Uterus (tissue), 4 donors: ENCODE measurements at regions of chr19 and their contacts with region 1.

Region 1: DNA sequence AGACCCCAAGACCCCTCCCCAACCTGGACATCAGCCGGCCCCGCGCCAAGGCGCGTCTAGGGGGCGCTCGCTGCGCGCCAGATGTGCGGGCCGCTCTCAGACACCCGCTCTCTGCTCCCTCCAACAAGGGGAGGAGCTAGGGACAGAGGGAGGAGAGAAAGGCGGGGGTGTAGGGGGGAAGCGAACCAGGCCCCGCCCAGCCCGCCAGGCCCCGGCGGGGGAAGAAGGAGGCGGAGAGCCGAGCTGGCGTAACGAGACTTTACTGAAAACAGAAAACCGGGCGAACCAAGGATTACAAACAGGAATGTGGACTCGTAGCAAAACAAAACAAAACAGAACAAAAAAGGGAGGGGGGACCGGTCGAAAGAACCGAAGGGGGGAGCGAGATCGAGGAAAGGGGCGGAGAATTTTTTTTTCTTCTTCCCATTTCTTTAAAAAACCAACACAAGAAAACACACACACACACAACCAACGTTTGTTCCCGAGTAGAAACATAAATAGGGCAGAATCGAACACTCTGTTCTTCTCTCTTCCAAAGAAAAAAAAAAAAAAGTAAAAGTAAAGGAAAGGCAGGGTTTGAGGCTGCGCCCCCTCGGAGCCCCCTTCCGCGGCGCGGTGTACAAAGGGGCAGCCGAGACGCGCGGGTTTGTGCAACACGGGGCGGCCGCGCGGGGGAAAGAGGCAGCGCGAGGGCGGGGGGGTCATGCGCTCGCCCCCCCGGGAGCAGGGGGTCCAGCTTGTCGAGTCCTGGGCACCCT is 1.7 kb downstream of the JUND start:
- DNase-seq: peak; percentile 94
- H3K4me3 ChIP-seq: peak overlapping the region; percentile 65 to 78
- H3K27ac ChIP-seq: peak overlapping the region; percentile 95 to 100
- H3K4me1 ChIP-seq: peaks cover 10 to 19% of the 10 kb centered on the region in 2 donors
- H3K27me3 ChIP-seq: no peaks in the 10 kb centered on the region
- CTCF ChIP-seq: peak; percentile 92 to 99 (median 96)
- POLR2A ChIP-seq: peak; percentile 95 to 99

Region 2: DNA sequence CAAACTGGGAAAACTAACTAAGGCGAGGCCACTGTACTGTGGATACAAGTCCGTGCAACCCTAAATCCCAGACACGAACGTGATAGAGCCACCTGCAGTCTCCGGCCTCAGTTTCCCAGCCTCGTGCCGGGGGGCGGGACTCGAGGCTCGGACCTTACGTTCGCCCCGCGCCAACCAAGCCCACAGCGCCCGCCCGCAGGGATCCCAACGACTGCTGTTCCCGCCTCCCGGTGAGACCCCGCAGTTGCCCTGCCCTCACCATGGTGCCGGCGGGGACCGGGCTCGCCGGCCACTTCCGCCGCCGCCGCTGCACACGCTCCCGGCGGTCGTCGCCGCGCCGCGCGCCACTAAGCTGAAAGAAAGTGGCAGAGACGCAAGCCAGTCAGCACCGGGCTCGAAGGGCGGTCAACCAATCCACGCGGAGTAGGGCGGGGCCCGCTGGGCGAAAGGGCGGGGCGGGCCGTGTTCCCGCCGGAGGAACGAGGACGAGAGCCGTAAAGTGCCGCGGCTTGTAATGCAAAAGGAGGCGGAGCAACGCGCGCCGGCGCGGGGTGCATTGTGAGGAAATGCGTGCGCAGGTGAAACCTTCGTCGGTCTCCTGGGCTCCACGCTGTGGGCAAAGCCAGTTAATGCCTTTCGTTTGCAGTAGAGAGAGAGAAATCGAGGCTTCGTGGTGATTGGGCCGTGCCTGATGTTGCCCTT is 43.2 kb after region 1 on chr19 and contains the start of gene LSM4:
- intact Hi-C with region 1: loop called (anchors 5 kb)
- DNase-seq: peak; percentile 97 to 99
- H3K4me3 ChIP-seq: peak within 1 kb of the TSS; percentile 63 to 67
- H3K27ac ChIP-seq: peak within 1 kb of the TSS; percentile 93 to 94
- H3K4me1 ChIP-seq: peaks cover 0 to 10% of the 10 kb centered on the region in 2 donors
- H3K27me3 ChIP-seq: no peaks in the 10 kb centered on the region
- CTCF ChIP-seq: peak in 3 of 4 experiments; percentile 17 to 42 (median 27)
- POLR2A ChIP-seq: peak; percentile 75 to 93
- total RNA-seq, gene LSM4: 8.8 to 120 (median 64.2) TPM